ENCODE measurements at regions of chr16 and their contacts with region 1.

Region 1: DNA sequence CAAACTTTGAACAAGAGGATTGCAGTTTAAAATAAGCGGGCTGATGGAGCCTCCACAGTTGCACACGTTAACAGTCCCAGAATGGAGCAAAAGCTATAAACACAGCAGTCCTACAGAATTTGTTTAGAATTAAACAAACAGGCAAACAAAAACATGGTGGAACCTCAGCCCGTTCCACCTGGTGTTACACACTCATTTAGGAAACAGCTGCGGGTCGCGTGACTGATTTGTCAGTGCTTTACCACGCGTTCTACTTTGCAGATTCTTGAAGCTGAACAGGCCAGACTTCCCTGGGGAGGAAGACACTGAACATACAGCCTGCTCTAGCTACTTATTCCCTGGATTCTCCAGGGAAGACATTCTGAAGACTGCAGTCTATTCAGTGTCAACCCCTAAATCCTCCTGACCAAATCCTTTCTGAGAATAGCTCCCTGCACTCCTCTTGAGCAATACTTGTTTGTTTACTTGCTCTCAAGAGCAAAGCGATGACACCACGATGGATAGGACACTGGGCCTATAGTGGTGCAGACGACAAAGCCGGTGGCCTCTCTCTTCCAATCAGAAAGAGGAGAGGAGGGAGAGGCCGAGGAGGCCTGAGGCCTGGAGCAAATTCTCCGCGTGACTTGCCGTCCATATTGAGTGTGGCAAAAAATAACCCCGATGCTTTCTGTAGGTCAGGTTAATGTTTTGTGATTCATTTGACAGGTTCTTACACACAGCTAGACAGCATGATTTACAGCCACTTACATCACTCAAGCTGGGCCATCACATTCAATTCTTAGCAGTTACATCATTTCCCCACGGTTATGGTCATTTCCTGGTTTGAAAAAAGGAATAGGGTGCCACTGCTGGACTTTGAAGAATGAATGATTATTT is 4.0 kb upstream of the MAP1LC3B start:
- DNase-seq: peak; percentile 100
- ATAC-seq: peak; percentile 76
- H3K4me3 ChIP-seq: peak overlapping the region; percentile 17 to 56 (median 35); a peak in 5 of 6 replicates
- H3K27ac ChIP-seq: peak overlapping the region; percentile 83
- H3K4me1 ChIP-seq: peaks cover 60% of the 10 kb centered on the region
- H3K27me3 ChIP-seq: no peaks in the 10 kb centered on the region; a peak in 1 of 5 replicates
- CTCF ChIP-seq: peak; percentile 14; the same call in 1 of the 2 replicates
- EP300 ChIP-seq: peak; percentile 61 to 87
- POLR2A ChIP-seq: peak in 1 of 2 experiments; percentile 83; a peak in 2 of 4 replicates
- RAD21 ChIP-seq: peak; percentile 57; the same call in 1 of the 2 replicates

Region 2: GRCh38 chr16:87324411-87325275 is 63.5 kb before region 1 on chr16:
- CTCF ChIA-PET with region 1: interaction called, 12 read pairs
- POLR2A ChIA-PET with region 1: interaction called, 85 read pairs
- in situ Hi-C with region 1: no loop called
- intact Hi-C with region 1: loop called (anchors 2 kb)
- DNase-seq: peak; percentile 46
- ATAC-seq: peak; percentile 47
- H3K4me3 ChIP-seq: no peak overlapping the region
- H3K27ac ChIP-seq: no peak overlapping the region
- H3K4me1 ChIP-seq: no peaks in the 10 kb centered on the region
- H3K27me3 ChIP-seq: no peaks in the 10 kb centered on the region
- CTCF ChIP-seq: peak; percentile 85
- EP300 ChIP-seq: no peak
- POLR2A ChIP-seq: peak in 1 of 2 experiments; percentile 32; a peak in 1 of 4 replicates
- RAD21 ChIP-seq: peak; percentile 65

Region 3: GRCh38 chr16:87358696-87359095 is 29.5 kb before region 1 on chr16:
- CTCF ChIA-PET with region 1: no interaction called
- POLR2A ChIA-PET with region 1: interaction called, 265 read pairs
- in situ Hi-C with region 1: no loop called
- intact Hi-C with region 1: no loop called
- DNase-seq: no peak
- ATAC-seq: no peak
- H3K4me3 ChIP-seq: no peak overlapping the region
- H3K27ac ChIP-seq: no peak overlapping the region
- H3K4me1 ChIP-seq: peaks cover 70% of the 10 kb centered on the region
- H3K27me3 ChIP-seq: no peaks in the 10 kb centered on the region
- CTCF ChIP-seq: no peak
- EP300 ChIP-seq: no peak
- POLR2A ChIP-seq: no peak
- RAD21 ChIP-seq: no peak

Region 4: DNA sequence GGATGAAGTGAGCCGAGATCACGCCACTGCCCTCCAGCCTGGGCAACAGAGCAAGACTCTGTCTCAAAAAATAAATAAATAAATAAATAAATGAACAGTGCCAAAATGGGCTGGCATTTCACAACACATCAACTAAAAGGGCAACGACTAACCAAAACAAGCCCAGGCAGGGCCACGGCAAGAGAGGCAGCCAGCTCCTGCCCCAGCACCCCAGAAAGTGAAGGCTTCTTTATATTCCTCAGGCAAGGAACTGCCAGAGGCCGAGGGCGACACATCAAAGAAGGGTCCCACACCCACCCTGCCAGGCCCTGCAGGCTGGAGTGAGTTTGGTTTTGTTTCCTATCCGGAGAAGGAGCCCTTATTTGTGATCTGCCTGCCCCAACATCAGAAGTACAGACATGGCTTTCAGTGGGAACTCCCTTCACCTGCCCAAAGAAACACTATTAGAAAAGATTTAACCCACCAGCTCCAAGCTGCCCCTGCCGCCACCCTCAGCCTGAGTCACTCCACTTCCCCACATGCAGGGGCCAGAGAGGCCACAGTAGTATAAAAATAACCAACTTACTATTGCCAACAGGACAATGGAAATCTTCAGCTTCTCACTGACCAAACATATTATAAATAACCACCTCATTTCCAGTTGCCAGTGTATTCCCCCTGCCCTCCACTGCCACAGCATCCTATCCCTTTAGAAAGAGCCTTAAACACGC is 12.6 kb before region 1 on chr16:
- CTCF ChIA-PET with region 1: no interaction called
- POLR2A ChIA-PET with region 1: interaction called, 265 read pairs
- in situ Hi-C with region 1: no loop called
- intact Hi-C with region 1: no loop called
- DNase-seq: no peak
- ATAC-seq: no peak
- H3K4me3 ChIP-seq: no peak overlapping the region; a peak in 1 of 6 replicates
- H3K27ac ChIP-seq: peak overlapping the region; percentile 21
- H3K4me1 ChIP-seq: peaks cover 96% of the 10 kb centered on the region
- H3K27me3 ChIP-seq: no peaks in the 10 kb centered on the region; a peak in 1 of 5 replicates
- CTCF ChIP-seq: no peak
- EP300 ChIP-seq: no peak
- POLR2A ChIP-seq: no peak
- RAD21 ChIP-seq: no peak

Region 5: DNA sequence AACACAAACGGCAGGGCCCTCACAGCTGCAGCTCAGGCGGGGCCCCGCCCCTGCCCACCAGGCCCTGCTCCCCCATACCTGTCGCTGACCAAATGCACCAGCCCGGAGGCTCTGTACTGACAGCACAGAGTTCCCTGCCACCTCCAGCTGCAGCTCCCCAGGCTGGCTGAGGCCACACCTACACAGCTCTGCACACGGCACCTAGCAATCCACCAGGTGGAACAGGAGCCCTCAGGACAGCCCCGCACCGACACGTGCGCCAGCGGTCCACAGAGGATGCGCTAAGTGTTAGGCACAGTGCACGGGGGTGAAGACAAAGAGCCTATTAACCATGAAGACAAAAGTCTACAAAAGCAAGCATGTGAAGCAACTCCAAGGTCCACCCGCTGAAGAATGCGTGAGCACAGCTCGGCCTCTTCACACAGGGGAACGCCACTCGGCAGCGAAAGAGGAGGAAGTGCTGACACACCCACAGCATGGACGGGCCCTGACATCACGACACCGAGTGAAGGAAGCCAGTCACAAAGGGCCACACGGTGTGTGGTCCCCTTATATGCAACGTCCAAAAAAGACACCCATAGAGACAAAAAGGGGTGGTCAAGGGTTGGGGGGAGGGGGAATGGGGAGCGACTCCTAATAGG is 99.3 kb after region 1 on chr16:
- CTCF ChIA-PET with region 1: no interaction called
- POLR2A ChIA-PET with region 1: interaction called, 15 read pairs
- in situ Hi-C with region 1: no loop called
- intact Hi-C with region 1: loop called (anchors 10 kb)
- DNase-seq: peak; percentile 97
- ATAC-seq: peak; percentile 87
- H3K4me3 ChIP-seq: peak overlapping the region; percentile 38 to 54 (median 50); a peak in 5 of 6 replicates
- H3K27ac ChIP-seq: peak overlapping the region; percentile 60
- H3K4me1 ChIP-seq: peaks cover 71% of the 10 kb centered on the region
- H3K27me3 ChIP-seq: no peaks in the 10 kb centered on the region
- CTCF ChIP-seq: peak; percentile 51
- EP300 ChIP-seq: peak in 1 of 2 experiments; percentile 18; a peak in 1 of 4 replicates
- POLR2A ChIP-seq: peak in 1 of 2 experiments; percentile 38; a peak in 1 of 4 replicates
- RAD21 ChIP-seq: 0 out of 2 replicates have a peak, but pooled peaks have one; percentile 8

Region 6: GRCh38 chr16:88303890-88304819 is 916.0 kb after region 1 on chr16:
- CTCF ChIA-PET with region 1: no interaction called
- POLR2A ChIA-PET with region 1: no interaction called
- in situ Hi-C with region 1: no loop called
- intact Hi-C with region 1: no loop called
- DNase-seq: peak; percentile 19
- ATAC-seq: peak; percentile 64
- H3K4me3 ChIP-seq: no peak overlapping the region
- H3K27ac ChIP-seq: no peak overlapping the region
- H3K4me1 ChIP-seq: no peaks in the 10 kb centered on the region
- H3K27me3 ChIP-seq: peaks cover 24 to 85% of the 10 kb centered on the region in 2 experiments
- CTCF ChIP-seq: no peak
- EP300 ChIP-seq: no peak
- POLR2A ChIP-seq: no peak
- RAD21 ChIP-seq: no peak

Region 7: GRCh38 chr16:88442727-88443576 is 1054.8 kb after region 1 on chr16:
- CTCF ChIA-PET with region 1: no interaction called
- POLR2A ChIA-PET with region 1: no interaction called
- in situ Hi-C with region 1: no loop called
- intact Hi-C with region 1: no loop called
- DNase-seq: peak; percentile 77
- ATAC-seq: peak; percentile 91
- H3K4me3 ChIP-seq: peak overlapping the region; percentile 4 to 66 (median 17); a peak in 3 of 6 replicates
- H3K27ac ChIP-seq: no peak overlapping the region
- H3K4me1 ChIP-seq: peaks cover 16% of the 10 kb centered on the region
- H3K27me3 ChIP-seq: peaks cover 45 to 94% of the 10 kb centered on the region in 2 experiments
- CTCF ChIP-seq: peak; percentile 100
- EP300 ChIP-seq: 0 out of 4 replicates have a peak, but pooled peaks have one; percentile 16 to 20
- POLR2A ChIP-seq: no peak
- RAD21 ChIP-seq: peak; percentile 100

Measured in HepG2 (cell line).